Left colon (tissue), 2 donors: ENCODE measurements at regions of chr2 and their contacts with region 1.

Region 1: GRCh38 chr2:63841254-63842022 is at the start of gene UGP2:
- DNase-seq: peak; percentile 93 to 97
- ATAC-seq: peak; percentile 80
- total RNA-seq, gene UGP2: 519 to 600 TPM

Region 2: GRCh38 chr2:63588385-63589147 is 252.9 kb before region 1 on chr2 and contains the starts of genes MDH1 and WDPCP:
- intact Hi-C with region 1: loop called in 1 of 2 experiments (anchors 5 kb)
- DNase-seq: peak; percentile 94 to 96
- ATAC-seq: peak; percentile 93
- total RNA-seq, gene MDH1: 167 to 186 TPM
- total RNA-seq, gene WDPCP: 3.1 to 3.7 TPM

Region 3: GRCh38 chr2:63903003-63903402 is 61.6 kb after region 1 on chr2:
- intact Hi-C with region 1: no loop called
- DNase-seq: no peak
- ATAC-seq: peak; percentile 4